PC-3 (cell line): ENCODE measurements at regions of chr1 and their contacts with region 1.

Region 1: GRCh38 chr1:226121587-226122400 is 59.3 kb downstream of the H3-3A start:
- DNase-seq: peak; percentile 86
- ATAC-seq: peak; percentile 57
- H3K4me3 ChIP-seq: peak overlapping the region; percentile 73
- H3K27ac ChIP-seq: peak overlapping the region; percentile 86
- H3K4me1 ChIP-seq: peaks cover 35% of the 10 kb centered on the region
- H3K27me3 ChIP-seq: no peaks in the 10 kb centered on the region
- CTCF ChIP-seq: peak; percentile 77

Region 2: DNA sequence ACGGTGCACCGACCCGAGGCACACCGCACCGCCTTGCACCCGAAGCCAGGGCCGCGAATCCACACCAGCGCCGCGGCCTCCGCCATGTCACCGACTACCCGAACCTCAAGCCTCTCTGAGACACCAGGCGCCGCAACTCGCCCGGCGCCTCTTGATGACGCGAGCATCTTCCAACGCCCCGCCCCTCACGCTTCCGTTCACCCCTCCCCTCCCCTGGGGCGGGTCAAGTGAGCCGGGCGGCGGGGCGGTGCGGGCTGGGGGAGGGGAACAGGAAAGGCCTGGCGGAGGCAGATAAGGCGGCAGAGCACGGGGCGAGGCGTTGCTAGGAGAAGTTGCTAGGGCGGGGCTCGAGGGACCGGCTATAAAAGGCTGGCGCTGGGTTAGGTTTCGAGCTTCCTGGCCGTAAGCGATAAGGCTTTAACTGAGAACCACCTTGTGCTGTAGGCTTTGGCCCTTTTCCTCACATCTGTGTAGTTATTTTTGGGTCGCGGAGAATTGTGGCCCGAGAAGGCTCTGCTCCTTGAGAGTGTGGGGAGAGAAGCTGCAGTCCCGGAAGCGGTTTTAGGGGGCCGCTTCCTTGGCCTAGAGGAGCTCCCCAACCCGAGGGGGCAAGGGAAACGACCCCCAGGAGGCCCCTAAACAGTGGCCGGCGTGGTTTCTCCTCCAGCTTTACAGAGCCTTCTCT is 122.4 kb before region 1 on chr1 and contains the start of gene SDE2:
- CTCF ChIA-PET with region 1: no interaction called
- POLR2A ChIA-PET with region 1: no interaction called
- intact Hi-C with region 1: loop called (anchors 5 kb)
- DNase-seq: peak; percentile 99
- ATAC-seq: peak; percentile 96
- H3K4me3 ChIP-seq: peak within 1 kb of the TSS; percentile 94
- H3K27ac ChIP-seq: peak within 1 kb of the TSS; percentile 23; the same call in 1 of the 2 replicates
- H3K4me1 ChIP-seq: peaks cover 23% of the 10 kb centered on the region
- H3K27me3 ChIP-seq: no peaks in the 10 kb centered on the region
- CTCF ChIP-seq: no peak
- total RNA-seq, gene SDE2: 26.1 and 30.2 TPM in 2 replicates

Region 3: DNA sequence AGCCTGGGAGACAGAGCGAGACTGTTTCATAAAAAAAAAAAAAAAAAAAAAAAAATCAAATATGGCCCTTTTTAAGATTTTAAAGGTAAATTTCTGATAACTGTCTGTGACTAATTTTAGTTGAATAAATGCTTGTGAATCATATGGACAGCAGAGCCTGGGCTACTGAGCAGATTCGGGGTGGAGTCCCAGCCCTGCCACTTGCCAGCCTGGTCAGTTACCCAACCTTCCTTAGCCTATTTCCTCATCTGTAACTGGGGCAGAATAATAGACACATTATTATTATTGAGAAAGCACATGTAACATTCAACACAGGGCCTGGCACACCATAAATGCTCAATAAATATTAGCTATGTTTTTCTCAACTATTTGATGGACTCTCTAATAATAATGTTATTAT is 70.4 kb before region 1 on chr1:
- CTCF ChIA-PET with region 1: no interaction called
- POLR2A ChIA-PET with region 1: no interaction called
- intact Hi-C with region 1: no loop called
- DNase-seq: peak; percentile 27
- ATAC-seq: peak; percentile 42; the same call in 1 of the 2 replicates
- H3K4me3 ChIP-seq: no peak overlapping the region
- H3K27ac ChIP-seq: no peak overlapping the region
- H3K4me1 ChIP-seq: peaks cover 7% of the 10 kb centered on the region
- H3K27me3 ChIP-seq: no peaks in the 10 kb centered on the region
- CTCF ChIP-seq: no peak

Region 4: DNA sequence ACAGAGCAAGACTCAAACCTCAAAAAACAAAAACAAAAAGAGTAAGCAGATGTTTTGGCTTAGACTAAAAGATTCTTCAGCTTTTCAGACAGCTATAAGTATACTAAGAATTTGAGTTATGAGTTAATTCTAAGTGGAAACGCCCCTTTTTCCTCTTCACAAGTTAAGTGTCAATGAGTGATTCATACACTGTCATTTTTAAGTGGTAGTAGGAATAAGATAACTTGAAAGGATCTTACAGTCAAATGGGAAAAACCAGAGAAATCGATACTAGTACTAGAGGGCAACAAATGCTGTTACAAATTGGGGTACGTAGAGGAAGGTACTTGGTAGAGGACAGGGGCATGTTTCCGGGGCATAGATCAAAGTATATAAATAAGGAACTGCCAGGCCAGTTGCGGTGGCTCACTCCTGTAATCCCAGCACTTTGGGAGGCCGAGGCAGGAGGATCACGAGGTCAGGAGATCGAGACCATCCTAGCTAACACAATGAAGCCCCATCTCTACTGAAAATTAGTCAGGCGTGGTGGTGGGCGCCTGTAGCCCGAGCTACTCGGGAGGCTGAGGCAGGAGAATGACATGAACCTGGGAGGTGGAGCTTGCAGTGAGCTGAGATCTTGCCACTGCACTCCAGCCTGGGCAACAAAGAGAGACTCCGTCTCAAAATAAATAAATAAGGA is 51.8 kb before region 1 on chr1:
- CTCF ChIA-PET with region 1: interaction called, 20 read pairs
- POLR2A ChIA-PET with region 1: interaction called, 3 read pairs
- intact Hi-C with region 1: no loop called
- DNase-seq: no peak
- ATAC-seq: no peak
- H3K4me3 ChIP-seq: no peak overlapping the region
- H3K27ac ChIP-seq: no peak overlapping the region
- H3K4me1 ChIP-seq: peaks cover 9% of the 10 kb centered on the region; the same call in 1 of the 2 replicates
- H3K27me3 ChIP-seq: no peaks in the 10 kb centered on the region
- CTCF ChIP-seq: no peak

Region 5: GRCh38 chr1:226109829-226110248 is 12.0 kb before region 1 on chr1:
- CTCF ChIA-PET with region 1: interaction called, 4 read pairs
- POLR2A ChIA-PET with region 1: no interaction called
- intact Hi-C with region 1: loop called (anchors 1 kb)
- DNase-seq: peak; percentile 97
- ATAC-seq: peak; percentile 88
- H3K4me3 ChIP-seq: peak overlapping the region; percentile 79
- H3K27ac ChIP-seq: peak overlapping the region; percentile 71
- H3K4me1 ChIP-seq: peaks cover 29% of the 10 kb centered on the region
- H3K27me3 ChIP-seq: no peaks in the 10 kb centered on the region
- CTCF ChIP-seq: peak; percentile 41

Region 6: GRCh38 chr1:226201029-226201593 is 79.3 kb after region 1 on chr1:
- CTCF ChIA-PET with region 1: interaction called, 44 read pairs
- POLR2A ChIA-PET with region 1: no interaction called
- intact Hi-C with region 1: loop called (anchors 1 kb)
- DNase-seq: peak; percentile 56
- ATAC-seq: peak; percentile 59
- H3K4me3 ChIP-seq: no peak overlapping the region
- H3K27ac ChIP-seq: no peak overlapping the region
- H3K4me1 ChIP-seq: no peaks in the 10 kb centered on the region
- H3K27me3 ChIP-seq: no peaks in the 10 kb centered on the region
- CTCF ChIP-seq: peak; percentile 75

Region 7: DNA sequence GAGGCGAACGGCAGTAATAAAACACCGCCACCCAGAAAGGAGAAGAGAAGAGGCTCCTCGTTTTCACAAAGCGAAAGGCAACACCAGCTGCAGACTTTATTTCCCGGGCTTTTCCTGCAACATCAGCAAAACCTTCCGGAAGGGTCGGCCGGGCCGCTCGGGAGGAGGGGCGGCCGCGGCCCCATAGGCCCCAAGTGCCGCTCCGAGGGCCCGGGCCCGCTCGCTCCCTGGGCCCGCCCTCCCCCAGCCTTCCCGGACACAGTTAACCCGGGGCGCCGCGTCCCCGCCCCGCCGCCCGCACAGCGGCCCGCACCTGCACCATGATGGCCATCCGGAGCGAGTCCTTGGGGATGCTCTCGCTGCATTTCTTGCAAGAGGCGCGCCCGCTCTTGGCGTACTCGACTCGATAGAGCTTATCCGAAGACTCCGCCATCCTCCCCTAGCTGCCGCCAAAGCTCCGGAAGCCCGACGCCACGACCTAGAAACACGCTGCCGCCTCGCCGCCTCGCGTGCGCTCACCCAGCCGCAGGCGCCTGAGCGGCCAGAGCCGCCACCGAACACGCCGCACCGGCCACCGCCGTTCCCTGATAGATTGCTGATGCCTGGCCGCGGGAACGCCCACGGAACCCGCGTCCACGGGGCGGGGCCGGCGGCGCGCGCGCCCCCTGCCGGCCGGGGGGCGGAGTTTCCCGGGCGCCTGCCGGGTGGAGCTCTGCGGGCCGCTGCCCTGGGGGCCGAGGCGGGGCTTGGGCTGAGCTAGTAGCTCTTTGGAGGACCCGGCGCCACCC is 285.9 kb after region 1 on chr1 and contains the start of gene PARP1:
- CTCF ChIA-PET with region 1: interaction called, 4 read pairs
- POLR2A ChIA-PET with region 1: interaction called, 3 read pairs
- intact Hi-C with region 1: loop called (anchors 5 kb)
- DNase-seq: peak; percentile 99
- ATAC-seq: peak; percentile 85
- H3K4me3 ChIP-seq: peak within 1 kb of the TSS; percentile 79
- H3K27ac ChIP-seq: peak within 1 kb of the TSS; percentile 56
- H3K4me1 ChIP-seq: peaks cover 35% of the 10 kb centered on the region
- H3K27me3 ChIP-seq: no peaks in the 10 kb centered on the region
- CTCF ChIP-seq: peak; percentile 82
- total RNA-seq, gene PARP1: 536 and 538 TPM in 2 replicates